ENCODE measurements at regions of chr1 and their contacts with region 1.

Region 1: DNA sequence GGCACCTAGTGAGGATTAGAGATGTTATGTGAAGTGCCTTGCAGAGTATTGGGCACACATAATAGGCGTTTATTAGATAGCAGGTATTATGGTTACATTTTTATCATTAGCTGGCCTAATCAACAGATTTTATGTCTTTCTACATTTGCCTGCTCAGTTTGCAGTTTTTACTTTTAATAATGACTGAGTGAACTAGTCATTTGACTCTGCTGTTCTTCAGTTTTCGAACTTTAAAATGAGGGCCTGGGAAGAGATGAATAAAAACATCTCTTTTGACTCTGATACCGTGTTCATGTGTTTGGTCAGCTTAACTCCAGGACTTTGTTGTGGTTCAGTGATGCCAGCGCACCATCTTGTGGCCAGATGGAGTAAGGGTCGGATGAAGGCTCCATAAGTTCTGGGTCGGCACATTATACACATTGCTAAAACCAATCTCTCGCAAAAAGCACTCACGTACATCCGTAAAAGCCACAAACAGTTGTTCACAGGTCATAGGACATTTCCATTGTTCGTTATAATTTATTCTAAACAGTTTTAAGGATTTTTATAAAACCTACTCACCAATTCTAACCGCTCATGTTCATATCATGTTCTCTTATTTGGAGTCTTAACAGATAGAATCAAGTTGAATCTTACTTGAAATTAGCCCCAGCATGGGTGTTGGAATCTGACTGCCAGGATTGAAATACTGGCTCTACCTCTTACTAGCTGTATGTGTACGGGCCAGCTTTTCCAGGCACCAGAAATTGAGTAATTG is 78.4 kb upstream of the GPR88 start:
- DNase-seq: peak in 5 of 6 donors; percentile 26 to 70 (median 59)
- ATAC-seq: peak; percentile 83 to 95 (median 92)
- H3K4me3 ChIP-seq: no peak overlapping the region
- H3K27ac ChIP-seq: no peak overlapping the region
- H3K4me1 ChIP-seq: no peaks in the 10 kb centered on the region
- H3K27me3 ChIP-seq: no peaks in the 10 kb centered on the region
- CTCF ChIP-seq: peak; percentile 32 to 72 (median 64)

Region 2: GRCh38 chr1:99808391-99809115 is 651.0 kb before region 1 on chr1:
- intact Hi-C with region 1: loop called in 1 of 3 experiments (anchors 5 kb)
- DNase-seq: peak in 2 of 6 donors; percentile 20 to 21
- ATAC-seq: peak; percentile 87 to 96 (median 93)
- H3K4me3 ChIP-seq: no peak overlapping the region
- H3K27ac ChIP-seq: no peak overlapping the region
- H3K4me1 ChIP-seq: no peaks in the 10 kb centered on the region
- H3K27me3 ChIP-seq: no peaks in the 10 kb centered on the region
- CTCF ChIP-seq: peak; percentile 41 to 57 (median 47)

Region 3: DNA sequence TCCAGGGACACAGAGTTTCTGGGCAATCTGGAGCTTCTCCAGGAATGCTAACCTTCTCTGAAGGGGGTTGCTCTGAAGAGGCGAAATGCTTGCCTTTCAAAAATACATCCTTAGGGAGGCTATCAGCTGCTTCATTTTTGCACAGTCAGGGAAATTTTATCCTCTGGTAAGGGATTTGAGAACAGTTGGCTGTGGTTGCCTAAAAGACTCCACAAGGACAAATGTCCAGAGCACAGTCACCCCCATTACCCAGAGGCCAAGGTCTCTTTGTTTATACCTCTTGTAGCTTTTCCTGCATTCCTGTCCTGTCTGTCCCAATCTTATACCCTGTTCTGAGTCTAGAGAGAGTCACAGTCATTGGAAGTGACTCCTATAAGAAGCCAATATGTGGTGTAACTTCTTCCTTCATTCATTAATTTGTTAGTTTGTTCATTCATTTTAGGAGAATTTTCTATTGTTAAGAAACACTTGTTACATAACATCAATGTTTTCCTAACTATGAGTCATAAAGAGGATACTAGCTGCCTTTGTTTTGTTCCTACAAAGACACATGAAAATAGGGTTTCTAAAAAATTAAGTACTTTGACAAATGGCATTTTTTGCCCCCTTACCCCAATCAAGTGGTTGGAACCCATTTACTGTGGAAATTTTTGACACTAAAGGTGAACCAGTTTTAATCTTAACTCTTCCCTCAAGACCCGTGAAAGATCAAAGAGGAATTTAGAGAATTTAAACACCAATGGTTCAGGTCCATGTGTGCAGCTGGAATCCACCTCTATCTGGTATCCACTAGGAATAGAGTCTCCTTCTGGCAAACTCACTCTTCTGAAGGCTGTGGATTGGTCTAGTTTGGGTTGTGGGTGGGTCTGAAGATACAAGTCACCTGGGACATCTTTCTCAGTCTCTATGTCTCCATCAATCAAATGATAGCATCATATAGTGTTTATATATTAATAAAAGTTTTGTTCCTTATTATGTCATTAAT is 125.5 kb after region 1 on chr1:
- intact Hi-C with region 1: loop called in 1 of 3 experiments (anchors 10 kb)
- DNase-seq: no peak
- ATAC-seq: no peak
- H3K4me3 ChIP-seq: no peak overlapping the region
- H3K27ac ChIP-seq: no peak overlapping the region
- H3K4me1 ChIP-seq: no peaks in the 10 kb centered on the region
- H3K27me3 ChIP-seq: no peaks in the 10 kb centered on the region
- CTCF ChIP-seq: no peak

Region 4: GRCh38 chr1:100866041-100866900 is 406.7 kb after region 1 on chr1:
- intact Hi-C with region 1: loop called in 1 of 3 experiments (anchors 5 kb)
- DNase-seq: no peak
- ATAC-seq: peak in 3 of 4 donors; percentile 77 to 80 (median 79)
- H3K4me3 ChIP-seq: no peak overlapping the region
- H3K27ac ChIP-seq: no peak overlapping the region
- H3K4me1 ChIP-seq: no peaks in the 10 kb centered on the region
- H3K27me3 ChIP-seq: no peaks in the 10 kb centered on the region
- CTCF ChIP-seq: peak in 3 of 4 donors; percentile 35 to 48 (median 36)